CD8-positive, alpha-beta T cell (primary cell): ENCODE measurements at regions of chr1 and their contacts with region 1.

Region 1: DNA sequence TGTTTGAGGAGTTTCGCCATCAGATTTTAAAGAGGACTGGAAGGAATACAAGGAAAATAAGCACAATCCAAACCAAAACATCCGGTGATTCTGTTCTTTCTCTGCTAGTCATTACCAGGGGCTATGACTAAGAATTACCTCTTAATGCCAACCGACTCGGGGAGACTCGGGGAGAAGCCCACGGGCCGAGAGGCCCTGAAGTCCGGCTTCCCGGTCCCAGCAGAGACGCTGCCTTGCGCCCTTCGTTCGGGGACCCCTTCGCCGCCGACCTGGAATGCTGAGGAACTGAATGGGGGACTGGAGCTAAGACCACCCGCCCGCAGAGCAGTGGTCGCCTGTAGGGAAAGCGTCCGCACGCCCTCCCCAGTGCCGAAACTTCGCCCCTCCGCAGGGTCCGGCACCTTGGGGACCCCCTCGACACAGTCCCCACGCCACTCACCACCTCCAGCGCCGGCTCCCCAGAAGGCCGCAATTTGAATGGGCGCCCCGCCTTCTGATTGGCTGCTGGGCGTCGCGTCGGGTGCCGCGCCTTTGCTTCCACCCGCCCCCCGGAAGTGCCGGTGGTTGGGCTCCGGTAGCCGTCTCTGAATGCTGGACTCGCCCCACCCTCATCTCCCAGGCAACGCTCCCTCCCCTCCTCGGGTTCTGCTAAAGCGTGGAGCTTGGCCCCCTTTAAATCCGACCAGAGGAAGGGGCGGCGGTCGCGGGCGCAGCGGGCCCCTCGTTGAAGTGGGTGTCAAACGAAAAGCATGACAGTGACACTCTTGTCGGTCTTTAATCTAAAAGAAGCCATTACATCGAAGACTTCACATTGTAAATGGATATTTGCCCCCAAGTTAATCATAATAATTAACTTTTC is at the start of gene KIF14:
- DNase-seq: peak; percentile 84 to 95 (median 91)
- ATAC-seq: peak; percentile 95
- H3K4me3 ChIP-seq: peak within 1 kb of the TSS; percentile 60 to 69
- H3K4me3 Mint-ChIP-seq: peak within 1 kb of the TSS; percentile 96
- H3K27ac ChIP-seq: peak within 1 kb of the TSS; percentile 44 to 45
- H3K27ac Mint-ChIP-seq: peak within 1 kb of the TSS; percentile 87
- H3K4me1 ChIP-seq: peaks cover 21% of the 10 kb centered on the region
- H3K4me1 Mint-ChIP-seq: peaks cover 15% of the 10 kb centered on the region
- H3K27me3 ChIP-seq: no peaks in the 10 kb centered on the region
- H3K27me3 Mint-ChIP-seq: no peaks in the 10 kb centered on the region
- CTCF ChIP-seq: no peak
- total RNA-seq, gene KIF14: 0.05 to 0.17 TPM

Region 2: GRCh38 chr1:200669314-200670241 is 49.1 kb after region 1 on chr1 and contains the start of gene DDX59:
- CTCF ChIA-PET with region 1: interaction called, 18 read pairs
- POLR2A ChIA-PET with region 1: interaction called, 6 read pairs
- intact Hi-C with region 1: loop called (anchors 1 kb)
- DNase-seq: peak; percentile 67 to 93 (median 89)
- ATAC-seq: peak; percentile 89
- H3K4me3 ChIP-seq: peak within 1 kb of the TSS; percentile 82 to 94
- H3K4me3 Mint-ChIP-seq: peak within 1 kb of the TSS; percentile 94
- H3K27ac ChIP-seq: peak within 1 kb of the TSS; percentile 95 to 98
- H3K27ac Mint-ChIP-seq: peak within 1 kb of the TSS; percentile 94
- H3K4me1 ChIP-seq: peaks cover 21% of the 10 kb centered on the region
- H3K4me1 Mint-ChIP-seq: peaks cover 42% of the 10 kb centered on the region
- H3K27me3 ChIP-seq: no peaks in the 10 kb centered on the region
- H3K27me3 Mint-ChIP-seq: no peaks in the 10 kb centered on the region
- CTCF ChIP-seq: no peak
- total RNA-seq, gene DDX59: 24.0 to 32.9 TPM

Region 3: GRCh38 chr1:200802865-200803512 is 182.5 kb after region 1 on chr1:
- CTCF ChIA-PET with region 1: interaction called, 81 read pairs
- POLR2A ChIA-PET with region 1: interaction called, 3 read pairs
- intact Hi-C with region 1: loop called (anchors 1 kb)
- DNase-seq: peak; percentile 43 to 85 (median 75)
- ATAC-seq: peak; percentile 92
- H3K4me3 ChIP-seq: no peak overlapping the region
- H3K4me3 Mint-ChIP-seq: no peak overlapping the region
- H3K27ac ChIP-seq: no peak overlapping the region
- H3K27ac Mint-ChIP-seq: no peak overlapping the region
- H3K4me1 ChIP-seq: no peaks in the 10 kb centered on the region
- H3K4me1 Mint-ChIP-seq: peaks cover 4% of the 10 kb centered on the region
- H3K27me3 ChIP-seq: no peaks in the 10 kb centered on the region
- H3K27me3 Mint-ChIP-seq: no peaks in the 10 kb centered on the region
- CTCF ChIP-seq: peak; percentile 97

Region 4: GRCh38 chr1:200971955-200972711 is 351.6 kb after region 1 on chr1:
- CTCF ChIA-PET with region 1: interaction called, 12 read pairs
- POLR2A ChIA-PET with region 1: no interaction called
- intact Hi-C with region 1: loop called in 1 of 2 experiments (anchors 5 kb)
- DNase-seq: peak; percentile 49 to 83 (median 66)
- ATAC-seq: peak; percentile 67
- H3K4me3 ChIP-seq: no peak overlapping the region
- H3K4me3 Mint-ChIP-seq: no peak overlapping the region
- H3K27ac ChIP-seq: no peak overlapping the region
- H3K27ac Mint-ChIP-seq: no peak overlapping the region
- H3K4me1 ChIP-seq: no peaks in the 10 kb centered on the region
- H3K4me1 Mint-ChIP-seq: no peaks in the 10 kb centered on the region
- H3K27me3 ChIP-seq: no peaks in the 10 kb centered on the region
- H3K27me3 Mint-ChIP-seq: no peaks in the 10 kb centered on the region
- CTCF ChIP-seq: peak; percentile 97

Region 5: DNA sequence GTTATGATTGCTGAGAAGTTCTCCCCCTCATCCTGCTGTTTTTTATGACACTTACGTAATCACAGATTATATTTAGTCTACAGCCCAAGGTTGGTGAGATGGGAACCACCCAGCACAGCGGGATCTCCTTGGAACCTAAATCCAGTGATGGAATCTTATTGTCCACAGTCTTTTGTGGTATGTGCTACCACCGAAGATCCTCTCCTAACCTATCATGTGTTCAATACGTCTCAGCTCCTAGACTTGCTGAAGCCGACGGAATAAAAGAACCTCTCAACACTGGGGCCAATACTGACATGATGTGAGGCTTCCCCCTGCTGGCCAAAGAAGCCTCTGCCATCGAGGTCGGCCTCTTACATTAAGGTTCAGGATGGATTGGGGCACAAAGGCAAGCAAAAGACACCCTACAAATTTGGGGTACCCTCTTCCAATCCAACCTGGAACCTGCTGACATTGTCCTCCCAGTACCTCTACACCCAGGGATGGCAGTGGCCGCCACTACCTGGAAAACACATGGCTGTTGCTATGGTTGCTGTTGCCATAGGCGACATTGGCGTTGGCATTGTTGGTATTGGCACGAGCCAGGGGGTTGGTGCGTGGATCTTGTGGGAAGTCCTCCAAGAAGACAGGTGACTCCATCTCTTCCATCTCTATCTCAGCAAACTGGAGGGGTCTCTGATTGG is 422.4 kb after region 1 on chr1:
- CTCF ChIA-PET with region 1: interaction called, 4 read pairs
- POLR2A ChIA-PET with region 1: no interaction called
- intact Hi-C with region 1: loop called in 1 of 2 experiments (anchors 2 kb)
- DNase-seq: peak; percentile 49 to 84 (median 73)
- ATAC-seq: peak; percentile 98
- H3K4me3 ChIP-seq: no peak overlapping the region
- H3K4me3 Mint-ChIP-seq: no peak overlapping the region
- H3K27ac ChIP-seq: no peak overlapping the region
- H3K27ac Mint-ChIP-seq: no peak overlapping the region
- H3K4me1 ChIP-seq: no peaks in the 10 kb centered on the region
- H3K4me1 Mint-ChIP-seq: peaks cover 3% of the 10 kb centered on the region
- H3K27me3 ChIP-seq: no peaks in the 10 kb centered on the region
- H3K27me3 Mint-ChIP-seq: no peaks in the 10 kb centered on the region
- CTCF ChIP-seq: peak; percentile 81

Region 6: DNA sequence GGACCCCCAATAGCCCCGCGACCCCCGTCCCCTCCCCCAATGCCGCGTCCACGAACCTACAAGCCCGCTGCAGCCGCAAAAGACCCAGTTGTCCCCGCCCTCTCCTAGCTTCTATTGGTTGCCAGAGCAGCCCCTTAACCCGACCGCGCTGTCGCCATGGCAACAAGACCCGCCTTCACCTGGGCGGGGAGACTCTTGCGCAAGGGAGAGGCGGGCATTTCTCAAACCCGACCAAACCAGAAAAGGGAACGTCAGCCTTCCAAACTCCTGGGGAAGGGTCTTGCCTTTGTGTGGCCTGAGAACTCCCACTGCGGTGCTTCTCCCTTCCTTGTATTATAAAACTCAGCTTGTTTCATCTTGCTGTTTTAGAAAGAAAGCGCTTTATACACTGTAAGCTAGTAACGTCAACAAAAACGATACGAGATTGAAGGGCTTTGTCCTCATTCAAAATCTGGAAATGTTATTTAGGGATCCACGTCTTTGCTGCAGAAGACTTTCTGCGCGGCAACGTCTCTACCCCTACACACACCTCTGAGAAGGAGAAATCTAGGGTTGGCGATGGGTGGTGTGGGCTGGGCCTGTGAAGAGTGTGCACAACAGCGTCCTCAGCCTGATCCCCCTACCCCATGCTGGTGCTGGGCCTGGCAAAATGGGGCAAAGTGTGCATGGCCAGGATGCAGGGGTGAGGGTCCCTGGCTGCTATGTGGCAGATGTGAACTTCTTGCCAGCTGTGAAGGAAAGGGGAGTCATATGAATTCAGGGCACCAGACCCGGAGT is 534.1 kb after region 1 on chr1 and contains the start of gene TMEM9:
- CTCF ChIA-PET with region 1: no interaction called
- POLR2A ChIA-PET with region 1: no interaction called
- intact Hi-C with region 1: loop called in 1 of 2 experiments (anchors 2 kb)
- DNase-seq: peak; percentile 97 to 100 (median 99)
- ATAC-seq: peak; percentile 97
- H3K4me3 ChIP-seq: peak within 1 kb of the TSS; percentile 71 to 78
- H3K4me3 Mint-ChIP-seq: peak within 1 kb of the TSS; percentile 85
- H3K27ac ChIP-seq: peak within 1 kb of the TSS; percentile 50 to 51
- H3K27ac Mint-ChIP-seq: peak within 1 kb of the TSS; percentile 78
- H3K4me1 ChIP-seq: peaks cover 16% of the 10 kb centered on the region
- H3K4me1 Mint-ChIP-seq: peaks cover 26% of the 10 kb centered on the region
- H3K27me3 ChIP-seq: no peaks in the 10 kb centered on the region
- H3K27me3 Mint-ChIP-seq: no peaks in the 10 kb centered on the region
- CTCF ChIP-seq: no peak
- total RNA-seq, gene TMEM9: 14.3 to 14.4 TPM